ENCODE measurements at regions of chr1 and their contacts with region 1.

Region 1: GRCh38 chr1:201023517-201023902 is at the start of gene KIF21B:
- DNase-seq: peak; percentile 92
- ATAC-seq: peak; percentile 83
- H3K4me3 ChIP-seq: peak within 1 kb of the TSS; percentile 53 to 83 (median 72)
- H3K4me3 Mint-ChIP-seq: peak within 1 kb of the TSS; percentile 97
- H3K27ac ChIP-seq: peak within 1 kb of the TSS; percentile 90 to 95
- H3K27ac Mint-ChIP-seq: peak within 1 kb of the TSS; percentile 98
- H3K4me1 ChIP-seq: peaks cover 69 to 79% of the 10 kb centered on the region in 2 donors
- H3K4me1 Mint-ChIP-seq: peaks cover 77% of the 10 kb centered on the region
- H3K27me3 ChIP-seq: no peaks in the 10 kb centered on the region
- H3K27me3 Mint-ChIP-seq: no peaks in the 10 kb centered on the region
- CTCF ChIP-seq: no peak
- total RNA-seq, gene KIF21B: 41.6 and 42.0 TPM in 2 replicates

Region 2: GRCh38 chr1:200620273-200621131 is 403.0 kb before region 1 on chr1 and contains the start of gene KIF14:
- CTCF ChIA-PET with region 1: interaction called, 7 read pairs
- POLR2A ChIA-PET with region 1: no interaction called
- intact Hi-C with region 1: loop called (anchors 1 kb)
- DNase-seq: peak; percentile 93
- ATAC-seq: peak; percentile 97
- H3K4me3 ChIP-seq: peak within 1 kb of the TSS; percentile 68 to 98 (median 72)
- H3K4me3 Mint-ChIP-seq: peak within 1 kb of the TSS; percentile 94
- H3K27ac ChIP-seq: peak within 1 kb of the TSS; percentile 64 to 77
- H3K27ac Mint-ChIP-seq: peak within 1 kb of the TSS; percentile 90
- H3K4me1 ChIP-seq: peaks cover 5 to 15% of the 10 kb centered on the region in 2 donors
- H3K4me1 Mint-ChIP-seq: peaks cover 9% of the 10 kb centered on the region
- H3K27me3 ChIP-seq: no peaks in the 10 kb centered on the region
- H3K27me3 Mint-ChIP-seq: no peaks in the 10 kb centered on the region
- CTCF ChIP-seq: no peak
- total RNA-seq, gene KIF14: 0.05 and 0.15 TPM in 2 replicates

Region 3: DNA sequence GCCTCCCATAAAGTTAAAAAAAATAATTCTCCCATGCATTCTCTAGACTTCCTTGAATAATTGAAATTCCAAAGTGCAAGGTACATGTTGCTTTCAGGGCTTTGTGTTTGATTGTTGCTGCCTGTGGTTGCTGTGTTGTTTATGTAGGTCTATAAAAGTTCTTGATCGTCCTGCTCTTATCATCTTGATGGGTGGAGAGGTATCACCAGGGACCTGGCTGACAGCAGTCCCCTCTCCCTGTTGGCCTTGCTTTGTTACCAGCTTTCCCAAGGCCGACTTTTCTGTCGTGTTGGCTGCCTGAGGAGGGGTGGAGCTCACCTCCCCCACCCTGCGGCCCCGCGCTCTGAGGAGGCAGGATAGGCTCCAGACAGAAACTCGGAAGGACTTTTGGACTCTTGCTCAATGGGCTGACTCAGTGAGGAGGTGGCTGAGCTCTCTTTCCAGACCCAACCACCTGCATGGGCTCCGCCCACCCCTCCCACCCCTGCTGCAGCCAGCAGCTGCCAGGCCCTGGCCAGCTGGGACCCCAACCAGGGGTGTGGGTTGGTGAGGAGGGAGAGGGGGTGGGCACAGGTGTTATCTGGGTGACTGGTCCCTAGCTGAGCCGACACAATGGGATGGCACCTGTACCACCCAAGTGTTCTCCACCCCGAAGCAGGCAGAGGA is 126.8 kb before region 1 on chr1:
- CTCF ChIA-PET with region 1: no interaction called
- POLR2A ChIA-PET with region 1: interaction called, 10 read pairs
- intact Hi-C with region 1: no loop called
- DNase-seq: no peak
- ATAC-seq: no peak
- H3K4me3 ChIP-seq: no peak overlapping the region
- H3K4me3 Mint-ChIP-seq: no peak overlapping the region
- H3K27ac ChIP-seq: no peak overlapping the region
- H3K27ac Mint-ChIP-seq: no peak overlapping the region
- H3K4me1 ChIP-seq: peaks cover 15 to 23% of the 10 kb centered on the region in 2 donors
- H3K4me1 Mint-ChIP-seq: peaks cover 22% of the 10 kb centered on the region
- H3K27me3 ChIP-seq: peaks cover 0 to 25% (median 11%) of the 10 kb centered on the region in 4 experiments
- H3K27me3 Mint-ChIP-seq: peaks cover 13% of the 10 kb centered on the region
- CTCF ChIP-seq: no peak

Region 4: DNA sequence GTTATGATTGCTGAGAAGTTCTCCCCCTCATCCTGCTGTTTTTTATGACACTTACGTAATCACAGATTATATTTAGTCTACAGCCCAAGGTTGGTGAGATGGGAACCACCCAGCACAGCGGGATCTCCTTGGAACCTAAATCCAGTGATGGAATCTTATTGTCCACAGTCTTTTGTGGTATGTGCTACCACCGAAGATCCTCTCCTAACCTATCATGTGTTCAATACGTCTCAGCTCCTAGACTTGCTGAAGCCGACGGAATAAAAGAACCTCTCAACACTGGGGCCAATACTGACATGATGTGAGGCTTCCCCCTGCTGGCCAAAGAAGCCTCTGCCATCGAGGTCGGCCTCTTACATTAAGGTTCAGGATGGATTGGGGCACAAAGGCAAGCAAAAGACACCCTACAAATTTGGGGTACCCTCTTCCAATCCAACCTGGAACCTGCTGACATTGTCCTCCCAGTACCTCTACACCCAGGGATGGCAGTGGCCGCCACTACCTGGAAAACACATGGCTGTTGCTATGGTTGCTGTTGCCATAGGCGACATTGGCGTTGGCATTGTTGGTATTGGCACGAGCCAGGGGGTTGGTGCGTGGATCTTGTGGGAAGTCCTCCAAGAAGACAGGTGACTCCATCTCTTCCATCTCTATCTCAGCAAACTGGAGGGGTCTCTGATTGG is 19.4 kb after region 1 on chr1:
- CTCF ChIA-PET with region 1: interaction called, 83 read pairs
- POLR2A ChIA-PET with region 1: interaction called, 11 read pairs
- intact Hi-C with region 1: loop called (anchors 2 kb)
- DNase-seq: peak; percentile 81
- ATAC-seq: peak; percentile 91
- H3K4me3 ChIP-seq: no peak overlapping the region
- H3K4me3 Mint-ChIP-seq: no peak overlapping the region
- H3K27ac ChIP-seq: no peak overlapping the region
- H3K27ac Mint-ChIP-seq: peak overlapping the region; percentile 1
- H3K4me1 ChIP-seq: peaks cover 0 to 2% of the 10 kb centered on the region in 2 donors
- H3K4me1 Mint-ChIP-seq: peaks cover 3% of the 10 kb centered on the region
- H3K27me3 ChIP-seq: peaks cover 0 to 3% (median 1%) of the 10 kb centered on the region in 4 experiments
- H3K27me3 Mint-ChIP-seq: peaks cover 3% of the 10 kb centered on the region
- CTCF ChIP-seq: peak; percentile 93

Region 5: DNA sequence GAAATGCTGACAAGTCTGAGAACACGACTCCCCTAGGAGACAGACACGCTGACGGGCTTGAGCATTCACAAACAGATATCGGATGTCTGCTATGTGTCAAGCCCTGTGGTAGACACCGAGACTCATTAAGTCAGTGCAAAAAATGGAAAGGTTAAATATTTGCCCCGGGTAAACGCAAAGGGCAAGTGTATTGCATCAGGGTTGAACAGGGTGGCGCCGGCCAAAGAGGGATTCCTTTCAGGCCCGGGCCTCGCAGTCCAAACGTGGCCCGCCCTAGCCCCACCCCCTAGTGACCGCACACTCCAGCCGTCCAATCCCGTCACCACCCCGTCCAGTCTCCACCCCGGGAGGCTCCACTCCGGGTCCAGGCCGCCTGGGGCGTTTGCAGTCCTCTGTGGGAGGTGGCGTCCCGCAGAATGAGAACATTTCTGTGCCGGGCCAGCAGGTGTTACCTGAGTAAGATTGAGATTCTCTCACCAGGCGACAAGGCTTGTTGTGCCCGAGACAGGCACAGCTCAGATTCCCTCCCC is 147.1 kb after region 1 on chr1:
- CTCF ChIA-PET with region 1: no interaction called
- POLR2A ChIA-PET with region 1: no interaction called
- intact Hi-C with region 1: loop called (anchors 5 kb)
- DNase-seq: peak; percentile 77
- ATAC-seq: peak; percentile 99
- H3K4me3 ChIP-seq: peak overlapping the region in 4 of 5 experiments; percentile 43 to 80 (median 62)
- H3K4me3 Mint-ChIP-seq: peak overlapping the region; percentile 90
- H3K27ac ChIP-seq: peak overlapping the region in 1 of 2 donors; percentile 20
- H3K27ac Mint-ChIP-seq: peak overlapping the region; percentile 77
- H3K4me1 ChIP-seq: peaks cover 7 to 14% of the 10 kb centered on the region in 2 donors
- H3K4me1 Mint-ChIP-seq: peaks cover 16% of the 10 kb centered on the region
- H3K27me3 ChIP-seq: peaks cover 0 to 22% (median 0%) of the 10 kb centered on the region in 4 experiments
- H3K27me3 Mint-ChIP-seq: peaks cover 13% of the 10 kb centered on the region
- CTCF ChIP-seq: no peak

Measured in B cell (primary cell).